Posterior vena cava (tissue), 2 donors: ENCODE measurements at regions of chr22 and their contacts with region 1.

Region 1: GRCh38 chr22:38485783-38486182 is 17.9 kb downstream of the KDELR3 start:
- DNase-seq: no peak

Region 2: DNA sequence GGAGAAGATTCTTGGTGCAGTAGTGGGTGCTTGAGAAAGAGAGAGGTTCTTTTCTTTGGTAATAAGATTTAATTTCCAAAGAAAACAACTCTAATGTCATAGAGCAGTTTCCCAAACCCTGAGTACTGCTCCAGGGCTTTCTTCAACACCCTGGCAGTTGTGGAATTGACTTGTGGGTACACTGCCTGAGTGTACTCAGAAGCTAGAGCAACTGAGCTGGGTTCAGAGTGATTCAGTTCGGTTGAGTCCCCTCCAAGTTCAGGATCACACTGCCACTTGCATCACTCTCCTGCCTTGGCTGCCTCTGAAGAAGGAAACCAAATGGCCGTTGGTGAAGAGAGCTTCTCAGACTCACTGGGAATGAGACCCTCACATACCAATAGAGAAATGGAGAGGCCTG is 78.9 kb after region 1 on chr22:
- intact Hi-C with region 1: loop called in 1 of 2 experiments (anchors 2 kb)
- DNase-seq: no peak